ENCODE measurements at regions of chr13 and their contacts with region 1.

Region 1: GRCh38 chr13:78981913-78982312 is 323.0 kb upstream of the OBI1 start:
- DNase-seq: no peak
- H3K4me3 ChIP-seq: no peak overlapping the region
- CTCF ChIP-seq: no peak
- POLR2A ChIP-seq: no peak

Region 2: DNA sequence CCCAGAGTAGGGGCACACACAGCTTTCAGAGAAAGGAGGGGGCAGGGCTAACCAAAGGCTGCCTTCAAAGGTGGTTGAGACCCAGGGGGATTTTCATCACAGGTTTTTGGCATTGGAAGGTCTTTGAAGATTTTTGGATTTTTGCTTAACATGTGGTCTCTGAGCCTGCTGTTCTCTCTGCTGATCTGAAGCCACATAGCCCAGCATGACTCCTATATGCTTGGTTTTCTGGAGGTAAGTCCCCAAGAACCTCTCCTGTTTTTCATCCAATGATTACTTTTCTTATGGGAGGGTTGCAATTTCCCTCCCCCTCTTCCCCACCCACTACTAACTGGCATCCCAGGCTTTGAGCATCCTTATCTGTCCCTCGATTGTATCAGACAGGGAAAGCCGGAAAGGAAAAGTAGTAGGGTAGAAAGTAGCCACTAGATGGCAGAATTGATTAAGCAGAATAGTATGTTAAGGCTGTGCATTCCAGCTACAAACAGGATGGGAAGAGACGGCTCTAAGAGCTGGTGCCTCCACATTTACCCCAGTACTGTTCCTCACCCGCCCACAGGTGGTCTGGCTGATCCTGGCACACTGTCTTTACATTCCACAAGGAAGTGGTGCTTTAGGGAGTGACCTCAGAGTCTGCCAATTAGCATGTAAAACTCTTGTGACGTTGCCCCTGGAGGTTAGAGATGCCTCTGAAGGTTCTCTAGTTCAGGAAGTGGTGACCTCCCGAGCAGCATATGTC is 844.3 kb before region 1 on chr13:
- intact Hi-C with region 1: loop called (anchors 5 kb)
- DNase-seq: no peak
- H3K4me3 ChIP-seq: no peak overlapping the region
- CTCF ChIP-seq: peak in 1 of 3 donors; percentile 32
- POLR2A ChIP-seq: no peak

Region 3: DNA sequence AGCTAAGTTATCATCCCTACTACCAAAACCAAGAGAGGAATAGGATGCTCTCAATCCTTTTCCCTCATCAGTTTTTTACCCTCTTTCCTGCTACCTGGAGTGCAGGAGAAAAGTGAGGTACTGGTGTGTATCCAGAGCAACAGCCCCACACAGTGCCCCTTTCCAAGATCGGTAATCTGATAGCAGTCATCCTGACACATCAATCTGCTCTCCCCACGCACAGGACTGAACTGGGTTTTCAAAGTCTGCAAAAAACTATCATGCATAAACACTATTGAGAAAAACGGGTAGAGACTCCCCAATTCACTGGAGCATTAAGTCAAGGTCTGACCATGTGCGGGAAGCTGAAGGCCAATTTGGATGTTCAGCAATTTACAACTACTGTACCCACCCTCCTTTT is 139.4 kb after region 1 on chr13:
- intact Hi-C with region 1: no loop called
- DNase-seq: no peak
- H3K4me3 ChIP-seq: no peak overlapping the region
- CTCF ChIP-seq: no peak
- POLR2A ChIP-seq: no peak

Measured in lower leg skin (tissue), 4 donors.